Heart left ventricle (tissue), 16 donors: ENCODE measurements at regions of chr14 and their contacts with region 1.

Region 1: DNA sequence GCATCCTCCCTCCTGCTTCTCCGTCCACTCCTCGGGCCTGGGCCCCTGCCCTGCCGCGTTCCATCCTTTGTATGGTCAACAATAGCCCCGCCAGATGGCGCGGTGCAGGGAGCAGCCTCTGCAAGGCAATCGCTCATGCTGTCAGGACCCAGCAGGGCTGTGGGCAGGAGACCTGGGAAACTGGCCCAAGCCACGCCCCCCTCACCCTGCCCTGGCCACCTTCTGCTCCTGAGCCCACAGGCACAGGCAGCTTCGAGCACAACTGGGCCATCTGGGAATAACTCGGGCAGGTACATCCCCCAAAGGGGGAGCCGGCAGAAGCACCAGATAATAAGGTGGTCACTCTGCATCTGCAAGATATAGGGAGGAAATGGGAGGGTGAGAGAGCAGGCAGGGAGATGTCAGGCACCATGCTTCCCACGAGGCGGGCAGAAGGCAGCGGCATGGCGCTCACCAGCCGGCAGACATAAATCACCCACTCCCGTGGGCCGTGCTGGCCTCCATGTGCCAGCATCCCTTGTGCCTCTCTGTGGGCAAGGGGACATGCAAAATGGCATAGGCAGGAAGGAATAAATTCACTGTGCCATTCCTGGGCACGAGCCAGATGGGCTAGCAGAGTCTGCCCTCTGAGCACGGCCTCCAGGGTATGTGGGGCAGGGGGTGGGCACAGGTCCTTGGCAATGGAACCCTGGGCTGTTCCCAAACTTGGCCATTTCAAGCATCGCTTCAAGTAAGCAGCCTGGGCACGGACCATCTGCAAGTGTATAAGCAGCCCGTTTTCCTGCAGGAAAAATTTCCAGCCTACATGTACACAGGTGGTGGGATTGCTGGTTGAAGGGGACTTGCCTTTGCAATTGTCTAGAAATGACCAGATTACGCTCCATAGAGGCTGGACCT is 40.5 kb downstream of the CCDC85C start:
- DNase-seq: peak; percentile 76 to 91 (median 86)
- ATAC-seq: peak; percentile 73 to 83 (median 76)
- H3K4me3 ChIP-seq: no peak overlapping the region
- H3K27ac ChIP-seq: peak overlapping the region in 10 of 12 donors; percentile 20 to 86 (median 70)
- H3K4me1 ChIP-seq: peaks cover 6 to 80% (median 56%) of the 10 kb centered on the region in 12 donors
- H3K27me3 ChIP-seq: no peaks in the 10 kb centered on the region
- CTCF ChIP-seq: peak in 11 of 12 donors; percentile 14 to 57 (median 45)
- POLR2A ChIP-seq: no peak

Region 2: DNA sequence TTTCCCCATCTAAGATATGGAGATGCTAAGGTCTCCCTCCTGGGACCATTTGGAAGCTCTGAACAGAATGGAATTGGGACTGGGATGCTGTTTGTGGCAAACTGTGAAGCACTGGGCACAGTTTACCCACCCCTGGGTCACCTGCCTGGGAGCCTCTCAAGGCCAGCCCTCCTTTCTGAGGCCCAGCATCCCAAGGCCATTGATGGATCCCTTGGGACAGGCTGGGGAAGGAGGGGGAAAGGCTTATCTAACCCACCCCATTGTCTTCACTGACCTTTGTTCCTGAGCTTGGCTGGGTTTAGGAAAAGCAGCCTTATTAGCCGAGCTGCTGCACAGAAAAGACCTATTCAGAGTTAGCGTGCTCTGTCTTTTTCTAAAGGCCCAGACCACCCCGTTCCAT is 35.3 kb after region 1 on chr14:
- intact Hi-C with region 1: loop called in 8 of 10 experiments (anchors 2 to 5 kb)
- DNase-seq: peak in 1 of 5 donors; percentile 50
- ATAC-seq: peak in 1 of 4 donors; percentile 45
- H3K4me3 ChIP-seq: no peak overlapping the region
- H3K27ac ChIP-seq: peak overlapping the region in 11 of 12 donors; percentile 35 to 77 (median 66)
- H3K4me1 ChIP-seq: peaks cover 26 to 100% (median 85%) of the 10 kb centered on the region in 12 donors
- H3K27me3 ChIP-seq: peaks cover 0 to 18% (median 0%) of the 10 kb centered on the region in 9 donors
- CTCF ChIP-seq: no peak
- POLR2A ChIP-seq: no peak